GM12878 (cell line): ENCODE measurements at regions of chr11 and their contacts with region 1.

Region 1: GRCh38 chr11:33065445-33066178 is 26.2 kb downstream of the TCP11L1 start:
- DNase-seq: no peak
- ATAC-seq: peak; percentile 84
- H3K4me3 ChIP-seq: no peak overlapping the region
- H3K27ac ChIP-seq: no peak overlapping the region
- H3K4me1 ChIP-seq: peaks cover 40% of the 10 kb centered on the region
- H3K27me3 ChIP-seq: no peaks in the 10 kb centered on the region
- CTCF ChIP-seq: peak; percentile 88 to 94 (median 91); a peak in 5 of 6 replicates
- EP300 ChIP-seq: no peak
- POLR2A ChIP-seq: no peak
- RAD21 ChIP-seq: peak; percentile 87

Region 2: GRCh38 chr11:32884770-32885384 is 180.7 kb before region 1 on chr11:
- CTCF ChIA-PET with region 1: interaction called, 34 read pairs
- POLR2A ChIA-PET with region 1: no interaction called
- RAD21 ChIA-PET with region 1: interaction called, 6 read pairs
- SMC1A ChIA-PET with region 1: interaction called, 21 read pairs
- in situ Hi-C with region 1: no loop called
- intact Hi-C with region 1: loop called (anchors 5 kb)
- DNase-seq: no peak
- ATAC-seq: peak; percentile 89
- H3K4me3 ChIP-seq: no peak overlapping the region
- H3K27ac ChIP-seq: no peak overlapping the region
- H3K4me1 ChIP-seq: no peaks in the 10 kb centered on the region
- H3K27me3 ChIP-seq: no peaks in the 10 kb centered on the region
- CTCF ChIP-seq: peak; percentile 60 to 63 (median 61)
- EP300 ChIP-seq: no peak
- POLR2A ChIP-seq: no peak
- RAD21 ChIP-seq: peak; percentile 52

Region 3: GRCh38 chr11:32960553-32961164 is 105.0 kb before region 1 on chr11:
- CTCF ChIA-PET with region 1: interaction called, 144 read pairs
- POLR2A ChIA-PET with region 1: interaction called, 3 read pairs
- RAD21 ChIA-PET with region 1: interaction called, 144 read pairs
- SMC1A ChIA-PET with region 1: interaction called, 141 read pairs
- in situ Hi-C with region 1: loop called (anchors 5 kb)
- intact Hi-C with region 1: loop called (anchors 1 kb)
- DNase-seq: peak; percentile 21
- ATAC-seq: peak; percentile 65
- H3K4me3 ChIP-seq: no peak overlapping the region
- H3K27ac ChIP-seq: no peak overlapping the region
- H3K4me1 ChIP-seq: no peaks in the 10 kb centered on the region
- H3K27me3 ChIP-seq: no peaks in the 10 kb centered on the region
- CTCF ChIP-seq: peak; percentile 38 to 71 (median 59); a peak in 5 of 6 replicates
- EP300 ChIP-seq: no peak
- POLR2A ChIP-seq: no peak
- RAD21 ChIP-seq: peak; percentile 90

Region 4: DNA sequence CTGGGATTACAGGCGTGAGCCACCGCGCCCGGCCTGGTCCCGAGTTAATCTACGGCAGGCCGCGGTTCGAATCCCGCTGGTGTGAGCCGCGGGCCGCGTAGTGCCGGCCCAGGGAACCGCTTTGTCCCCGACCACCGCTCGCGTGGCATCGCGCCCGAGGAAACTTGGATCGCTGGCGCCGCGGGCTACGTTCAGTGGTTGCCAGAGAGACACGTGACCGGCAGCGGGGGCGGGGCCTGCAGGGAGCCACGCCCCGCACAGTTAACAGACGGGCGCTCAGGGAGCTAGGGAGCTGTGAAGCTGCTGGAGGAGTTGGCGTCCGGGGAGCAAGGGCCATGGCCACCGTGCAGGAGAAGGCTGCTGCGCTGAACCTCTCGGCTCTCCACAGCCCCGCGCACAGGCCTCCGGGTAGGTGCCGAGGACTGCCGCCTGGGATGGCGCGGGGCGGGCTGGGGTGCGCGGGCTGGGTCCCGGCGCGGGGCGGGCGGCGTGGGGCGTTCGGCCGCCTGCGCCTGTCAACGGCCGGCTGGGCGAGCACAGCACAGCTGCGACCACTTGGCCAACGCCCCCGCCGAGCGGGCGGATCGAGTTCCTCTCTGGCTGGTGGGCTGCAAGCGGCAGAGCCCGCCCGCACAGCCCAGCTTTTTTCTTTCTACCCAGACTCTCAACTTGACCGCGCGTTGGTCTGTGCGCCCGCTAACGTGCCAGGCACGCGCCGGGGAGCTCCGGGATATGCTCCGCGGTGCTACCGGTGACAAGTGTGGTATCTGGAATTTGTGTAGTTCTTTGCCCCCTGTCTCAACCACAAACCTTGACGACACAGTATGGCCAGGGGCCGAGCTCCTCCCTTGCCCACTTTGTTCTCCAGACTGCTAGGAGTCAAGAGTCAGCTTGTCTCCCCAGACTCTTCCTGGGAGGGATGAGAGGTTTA is 49.7 kb before region 1 on chr11 and contains the start of gene DEPDC7:
- CTCF ChIA-PET with region 1: interaction called, 6 read pairs
- POLR2A ChIA-PET with region 1: interaction called, 9 read pairs
- RAD21 ChIA-PET with region 1: interaction called, 8 read pairs
- SMC1A ChIA-PET with region 1: interaction called, 9 read pairs
- in situ Hi-C with region 1: no loop called
- intact Hi-C with region 1: loop called (anchors 2 kb)
- DNase-seq: no peak
- ATAC-seq: peak; percentile 77
- H3K4me3 ChIP-seq: peak within 1 kb of the TSS; percentile 50; the same call in 1 of the 2 replicates
- H3K27ac ChIP-seq: no peak within 1 kb of the TSS
- H3K4me1 ChIP-seq: peaks cover 13% of the 10 kb centered on the region
- H3K27me3 ChIP-seq: peaks cover 0 to 5% of the 10 kb centered on the region in 2 experiments; a peak in 2 of 4 replicates
- CTCF ChIP-seq: no peak
- EP300 ChIP-seq: no peak
- POLR2A ChIP-seq: no peak
- RAD21 ChIP-seq: no peak
- polyA plus RNA-seq, gene DEPDC7: 0.06 to 0.26 TPM

Region 5: DNA sequence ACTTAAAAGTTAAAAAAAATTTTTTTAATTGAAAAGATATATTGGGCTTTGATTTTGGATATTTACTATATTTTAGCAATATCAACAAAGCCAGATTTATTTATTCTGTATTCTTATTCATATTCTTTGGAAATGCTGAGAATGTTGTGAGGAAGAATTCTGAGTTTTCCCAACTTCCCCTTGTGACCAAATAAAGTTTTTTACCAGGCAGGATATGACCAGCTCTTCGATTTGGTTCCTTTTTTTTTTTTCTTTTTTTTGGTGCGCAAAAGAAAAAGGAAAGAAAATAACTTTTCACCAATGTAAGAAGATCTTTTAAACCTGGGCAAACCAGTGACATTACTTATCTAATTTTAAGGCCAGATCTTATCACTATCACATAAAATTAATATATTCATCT is 13.4 kb before region 1 on chr11:
- CTCF ChIA-PET with region 1: interaction called, 9 read pairs
- POLR2A ChIA-PET with region 1: no interaction called
- RAD21 ChIA-PET with region 1: no interaction called
- SMC1A ChIA-PET with region 1: interaction called, 21 read pairs
- in situ Hi-C with region 1: no loop called
- intact Hi-C with region 1: no loop called
- DNase-seq: no peak
- ATAC-seq: no peak
- H3K4me3 ChIP-seq: no peak overlapping the region
- H3K27ac ChIP-seq: no peak overlapping the region
- H3K4me1 ChIP-seq: no peaks in the 10 kb centered on the region
- H3K27me3 ChIP-seq: no peaks in the 10 kb centered on the region
- CTCF ChIP-seq: no peak
- EP300 ChIP-seq: no peak
- POLR2A ChIP-seq: no peak
- RAD21 ChIP-seq: no peak

Region 6: GRCh38 chr11:33490842-33491370 is 425.3 kb after region 1 on chr11:
- CTCF ChIA-PET with region 1: no interaction called
- POLR2A ChIA-PET with region 1: no interaction called
- RAD21 ChIA-PET with region 1: no interaction called
- SMC1A ChIA-PET with region 1: no interaction called
- in situ Hi-C with region 1: no loop called
- intact Hi-C with region 1: no loop called
- DNase-seq: no peak
- ATAC-seq: no peak
- H3K4me3 ChIP-seq: no peak overlapping the region
- H3K27ac ChIP-seq: no peak overlapping the region
- H3K4me1 ChIP-seq: no peaks in the 10 kb centered on the region
- H3K27me3 ChIP-seq: no peaks in the 10 kb centered on the region
- CTCF ChIP-seq: no peak
- EP300 ChIP-seq: no peak
- POLR2A ChIP-seq: no peak
- RAD21 ChIP-seq: no peak